GM10248 (cell line): ENCODE measurements at regions of chr19 and their contacts with region 1.

Region 1: GRCh38 chr19:40416918-40417642 is 3.9 kb upstream of the PRX start:
- DNase-seq: peak; percentile 33
- CTCF ChIP-seq: no peak

Region 2: DNA sequence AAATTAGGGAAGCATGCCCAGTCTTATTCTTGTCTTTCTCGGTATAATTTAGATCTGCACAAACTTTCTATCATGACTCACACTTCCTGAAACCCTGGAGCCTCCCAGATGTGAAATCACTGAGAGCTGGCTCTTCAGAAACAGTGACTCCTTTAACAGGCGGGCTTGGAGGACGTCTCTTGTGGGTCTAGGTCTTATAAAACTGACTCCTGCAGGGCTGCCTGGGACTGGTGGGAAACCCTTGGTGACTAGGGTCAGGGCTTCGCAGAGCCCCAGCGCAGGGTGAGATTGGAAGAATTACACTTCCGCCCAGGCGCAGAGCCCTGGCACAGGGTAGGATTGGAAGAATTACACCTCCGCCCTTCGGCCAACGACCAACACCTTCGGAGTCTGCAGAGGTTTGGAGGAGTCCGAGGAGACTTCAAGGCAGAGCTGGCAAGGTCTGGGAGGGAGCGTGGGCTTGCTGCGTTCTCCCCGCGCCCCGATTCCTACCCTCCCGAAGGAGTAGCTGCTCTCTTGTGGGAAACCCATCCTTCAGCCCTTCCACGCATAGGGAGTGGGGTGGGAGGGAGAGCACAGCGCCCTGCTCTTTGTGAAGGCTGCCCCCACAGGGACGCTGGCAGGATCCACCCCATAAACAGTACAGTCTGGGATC is 269.3 kb before region 1 on chr19:
- CTCF ChIA-PET with region 1: no interaction called
- POLR2A ChIA-PET with region 1: no interaction called
- DNase-seq: no peak
- CTCF ChIP-seq: no peak

Region 3: GRCh38 chr19:40457048-40457447 is 40.0 kb after region 1 on chr19:
- CTCF ChIA-PET with region 1: interaction called, 9 read pairs
- POLR2A ChIA-PET with region 1: interaction called, 11 read pairs
- DNase-seq: no peak
- CTCF ChIP-seq: no peak